AG04450 (cell line): ENCODE measurements at regions of chr7 and their contacts with region 1.

Region 1: DNA sequence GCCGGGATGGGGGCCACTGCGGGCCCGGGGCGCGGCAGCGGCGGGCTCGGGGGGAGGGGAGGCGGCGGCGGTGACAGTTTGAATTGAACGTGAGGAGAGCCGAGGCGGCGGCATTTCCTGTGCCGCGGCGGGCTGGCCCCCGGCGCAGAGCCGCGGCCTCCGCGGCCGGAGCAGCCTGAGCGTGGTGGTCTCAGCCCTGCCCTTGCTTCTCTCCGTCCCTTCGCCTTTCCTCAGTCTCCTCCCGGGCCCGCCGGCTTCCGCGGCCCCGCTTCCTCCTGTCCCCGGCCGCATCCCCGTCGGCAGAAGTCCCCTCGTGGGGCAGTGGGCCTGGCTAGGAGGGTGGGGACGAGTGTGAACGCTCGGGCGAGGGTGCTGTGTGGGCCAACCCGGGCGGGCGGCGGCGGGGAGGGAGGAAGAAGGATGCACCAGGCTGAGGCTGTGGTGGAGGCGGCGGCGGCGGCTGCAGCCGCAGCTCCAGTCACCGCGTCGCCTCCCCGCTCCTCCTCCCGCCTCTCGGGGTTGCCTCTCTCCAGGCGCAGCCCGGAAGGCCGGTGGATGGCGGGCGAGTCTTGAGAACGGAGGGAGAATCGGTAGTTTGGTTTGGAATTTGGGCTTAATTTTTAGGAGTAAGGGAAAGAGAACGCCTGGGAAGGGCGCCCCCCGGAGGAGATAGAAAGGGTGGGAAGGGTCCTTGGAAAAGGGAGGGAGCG is 690 bp downstream of the SEPTIN7 start:
- DNase-seq: no peak
- H3K4me3 ChIP-seq: peak overlapping the region; percentile 78
- H3K27ac ChIP-seq: peak overlapping the region; percentile 82
- H3K27me3 ChIP-seq: no peaks in the 10 kb centered on the region
- CTCF ChIP-seq: peak; percentile 74

Region 2: DNA sequence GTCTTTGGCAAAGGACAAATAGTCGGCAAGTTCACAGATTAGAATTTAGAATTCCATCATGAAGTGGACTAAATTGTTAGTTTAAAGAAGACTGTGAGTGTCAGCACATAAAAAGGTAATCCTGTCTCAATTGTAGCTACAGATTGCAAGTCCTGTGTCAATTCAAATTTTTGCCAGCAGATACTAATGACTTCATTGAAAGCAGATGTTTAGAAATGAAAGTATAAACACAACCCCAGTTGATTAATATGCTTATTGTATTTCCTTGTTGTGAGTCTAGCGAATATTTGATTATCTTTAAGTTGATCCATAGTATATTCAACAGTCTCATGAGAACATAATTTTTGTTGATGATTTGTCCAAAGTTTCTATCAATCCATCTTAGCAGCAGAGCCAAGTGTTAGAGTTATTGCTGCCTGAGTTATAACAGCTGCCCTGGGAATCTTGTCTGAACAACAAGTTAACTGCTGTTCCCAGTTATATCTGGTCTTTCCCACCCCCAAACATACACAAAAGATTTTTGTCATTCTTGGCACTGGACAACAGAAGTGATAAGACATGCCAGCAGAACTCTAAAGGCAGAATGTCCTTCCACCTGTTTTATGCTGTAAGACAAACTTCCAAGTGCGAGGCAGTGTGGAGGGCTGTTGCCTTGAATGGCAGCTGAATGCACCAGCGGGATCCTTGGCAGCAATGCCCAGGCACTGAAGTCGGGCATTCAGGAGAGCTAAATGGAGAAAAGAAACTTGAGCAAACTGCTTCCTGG is 85.3 kb before region 1 on chr7:
- CTCF ChIA-PET with region 1: interaction called, 58 read pairs
- POLR2A ChIA-PET with region 1: interaction called, 10 read pairs
- DNase-seq: no peak
- H3K4me3 ChIP-seq: no peak overlapping the region
- H3K27ac ChIP-seq: no peak overlapping the region
- H3K27me3 ChIP-seq: peaks cover 15% of the 10 kb centered on the region
- CTCF ChIP-seq: no peak